Naive thymus-derived CD4-positive, alpha-beta T cell (primary cell): ENCODE measurements at regions of chr10 and their contacts with region 1.

Region 1: GRCh38 chr10:45420453-45421192 is 46.6 kb downstream of the ALOX5 start:
- DNase-seq: peak in 8 of 9 donors; percentile 35 to 52 (median 39)
- ATAC-seq: peak; percentile 47
- H3K4me3 ChIP-seq: peak overlapping the region; percentile 35
- H3K4me3 Mint-ChIP-seq: peak overlapping the region; percentile 89 to 97 (median 94)
- H3K27ac ChIP-seq: peak overlapping the region; percentile 82
- H3K27ac Mint-ChIP-seq: peak overlapping the region; percentile 87 to 99 (median 96)
- H3K4me1 ChIP-seq: peaks cover 32 to 41% of the 10 kb centered on the region in 2 donors
- H3K4me1 Mint-ChIP-seq: peaks cover 39 to 77% (median 50%) of the 10 kb centered on the region in 7 donors
- H3K27me3 ChIP-seq: no peaks in the 10 kb centered on the region
- H3K27me3 Mint-ChIP-seq: no peaks in the 10 kb centered on the region

Region 2: GRCh38 chr10:45373576-45374349 is 46.9 kb before region 1 on chr10 and contains the start of gene ALOX5:
- CTCF ChIA-PET with region 1: no interaction called
- POLR2A ChIA-PET with region 1: no interaction called
- intact Hi-C with region 1: loop called in 1 of 2 experiments (anchors 2 kb)
- DNase-seq: peak in 5 of 9 donors; percentile 8 to 48 (median 19)
- ATAC-seq: peak; percentile 63
- H3K4me3 ChIP-seq: peak within 1 kb of the TSS; percentile 37
- H3K4me3 Mint-ChIP-seq: peak within 1 kb of the TSS; percentile 67 to 92 (median 86)
- H3K27ac ChIP-seq: no peak within 1 kb of the TSS
- H3K27ac Mint-ChIP-seq: peak within 1 kb of the TSS in 3 of 9 donors; percentile 45 to 87 (median 62)
- H3K4me1 ChIP-seq: peaks cover 0 to 6% of the 10 kb centered on the region in 2 donors
- H3K4me1 Mint-ChIP-seq: peaks cover 8 to 33% (median 21%) of the 10 kb centered on the region in 7 donors
- H3K27me3 ChIP-seq: peaks cover 0 to 10% of the 10 kb centered on the region in 2 donors
- H3K27me3 Mint-ChIP-seq: peaks cover 41 to 80% (median 44%) of the 10 kb centered on the region in 5 donors
- total RNA-seq, gene ALOX5: 1.2 to 143 (median 14.8) TPM

Region 3: GRCh38 chr10:45454859-45455258 is 34.2 kb after region 1 on chr10:
- CTCF ChIA-PET with region 1: no interaction called
- POLR2A ChIA-PET with region 1: no interaction called
- intact Hi-C with region 1: loop called in 1 of 2 experiments (anchors 5 kb)
- DNase-seq: no peak
- ATAC-seq: no peak
- H3K4me3 ChIP-seq: no peak overlapping the region
- H3K4me3 Mint-ChIP-seq: peak overlapping the region in 1 of 10 donors; percentile 72
- H3K27ac ChIP-seq: no peak overlapping the region
- H3K27ac Mint-ChIP-seq: peak overlapping the region in 7 of 9 donors; percentile 12 to 90 (median 65)
- H3K4me1 ChIP-seq: no peaks in the 10 kb centered on the region
- H3K4me1 Mint-ChIP-seq: peaks cover 0 to 48% (median 8%) of the 10 kb centered on the region in 7 donors
- H3K27me3 ChIP-seq: no peaks in the 10 kb centered on the region
- H3K27me3 Mint-ChIP-seq: no peaks in the 10 kb centered on the region

Region 4: DNA sequence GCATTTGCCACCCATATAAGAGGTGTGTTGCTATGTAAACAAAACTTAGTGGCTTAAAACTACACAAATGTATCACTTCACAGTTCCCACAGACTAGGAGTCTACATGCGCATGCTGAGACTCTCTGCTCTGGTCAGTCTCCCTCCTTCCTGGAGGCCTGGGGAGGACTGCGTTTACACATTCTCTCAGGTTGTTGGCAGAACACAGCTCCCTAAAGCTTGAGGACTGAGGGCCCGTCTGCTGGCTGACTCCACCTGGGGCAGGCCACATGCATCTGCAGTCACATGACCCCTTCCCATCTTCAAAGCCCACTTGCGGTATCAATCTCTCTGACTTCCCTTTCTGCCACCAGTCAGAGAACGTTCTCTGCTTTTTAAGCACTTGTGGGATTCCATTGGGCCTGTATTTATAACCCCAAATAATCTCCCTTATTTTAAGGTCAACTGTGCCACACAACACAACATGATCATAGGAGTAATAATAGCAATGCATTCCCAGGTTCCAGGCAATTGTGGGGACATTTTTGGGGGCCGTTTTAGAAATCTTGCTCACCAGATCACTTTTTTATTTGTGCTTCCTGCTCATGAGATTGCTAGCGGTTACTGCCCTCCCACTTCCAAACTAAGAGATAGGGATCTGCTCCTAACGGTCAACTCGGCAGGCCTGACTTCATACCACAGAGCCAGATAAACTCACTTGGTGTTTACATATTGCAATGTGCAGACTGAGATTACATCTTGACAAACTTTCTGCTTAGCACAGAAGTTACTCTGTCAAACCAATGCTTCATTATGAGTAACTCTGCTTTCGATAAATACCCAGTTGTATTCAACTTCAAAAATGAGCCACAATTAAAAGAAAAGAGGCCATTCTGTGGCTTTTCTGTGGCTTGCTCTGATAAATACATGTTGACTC is 49.7 kb after region 1 on chr10:
- CTCF ChIA-PET with region 1: no interaction called
- POLR2A ChIA-PET with region 1: no interaction called
- intact Hi-C with region 1: loop called in 1 of 2 experiments (anchors 2 kb)
- DNase-seq: peak; percentile 17 to 84 (median 74)
- ATAC-seq: peak; percentile 91
- H3K4me3 ChIP-seq: no peak overlapping the region
- H3K4me3 Mint-ChIP-seq: peak overlapping the region; percentile 48 to 73 (median 62)
- H3K27ac ChIP-seq: peak overlapping the region; percentile 45
- H3K27ac Mint-ChIP-seq: peak overlapping the region; percentile 74 to 93 (median 88)
- H3K4me1 ChIP-seq: peaks cover 12 to 16% of the 10 kb centered on the region in 2 donors
- H3K4me1 Mint-ChIP-seq: peaks cover 18 to 57% (median 43%) of the 10 kb centered on the region in 7 donors
- H3K27me3 ChIP-seq: no peaks in the 10 kb centered on the region
- H3K27me3 Mint-ChIP-seq: no peaks in the 10 kb centered on the region